ENCODE measurements at regions of chr10 and their contacts with region 1.

Region 1: DNA sequence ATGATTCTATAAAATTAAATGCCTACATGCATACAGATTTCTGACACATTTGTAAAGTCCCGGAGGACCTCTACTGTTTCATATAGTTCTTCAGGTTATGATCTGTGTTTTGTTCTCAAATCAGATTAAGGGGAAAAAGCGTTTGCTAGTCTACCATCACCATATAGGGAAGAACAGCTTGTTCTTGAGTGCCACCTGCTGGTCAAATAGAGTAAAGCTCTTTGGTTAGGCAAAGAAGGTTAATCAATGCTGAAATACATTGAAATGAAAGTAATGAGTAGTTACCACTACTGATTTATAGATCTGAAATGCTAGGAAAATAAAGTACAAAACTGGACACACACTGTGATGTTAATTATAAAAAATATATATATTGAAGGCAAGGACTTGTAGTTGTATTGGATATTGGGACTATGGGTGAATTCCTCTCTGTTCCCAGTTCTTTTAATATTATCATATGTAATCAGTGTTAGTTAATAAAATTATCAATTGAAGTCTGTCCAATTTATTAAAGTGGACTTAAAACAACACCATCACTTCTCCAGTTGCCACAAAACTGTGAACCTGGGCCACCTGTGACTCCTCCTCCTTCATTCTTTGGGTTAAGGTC is 72.6 kb upstream of the PDLIM1 start:
- DNase-seq: peak; percentile 50
- ATAC-seq: peak; percentile 90
- H3K4me3 ChIP-seq: no peak overlapping the region
- H3K27ac ChIP-seq: no peak overlapping the region
- H3K4me1 ChIP-seq: peaks cover 10% of the 10 kb centered on the region; the same call in 1 of the 2 replicates
- H3K27me3 ChIP-seq: no peaks in the 10 kb centered on the region
- CTCF ChIP-seq: peak; percentile 75 to 87 (median 83)
- EP300 ChIP-seq: no peak
- POLR2A ChIP-seq: no peak
- RAD21 ChIP-seq: peak; percentile 100

Region 2: GRCh38 chr10:95133016-95133752 is 230.2 kb before region 1 on chr10:
- CTCF ChIA-PET with region 1: interaction called, 52 read pairs
- POLR2A ChIA-PET with region 1: no interaction called
- RAD21 ChIA-PET with region 1: interaction called, 40 read pairs
- SMC1A ChIA-PET with region 1: interaction called, 30 read pairs
- in situ Hi-C with region 1: loop called (anchors 5 kb)
- intact Hi-C with region 1: loop called (anchors 1 kb)
- DNase-seq: peak; percentile 45
- ATAC-seq: peak; percentile 99
- H3K4me3 ChIP-seq: no peak overlapping the region
- H3K27ac ChIP-seq: no peak overlapping the region
- H3K4me1 ChIP-seq: no peaks in the 10 kb centered on the region
- H3K27me3 ChIP-seq: no peaks in the 10 kb centered on the region
- CTCF ChIP-seq: peak; percentile 71 to 83 (median 79)
- EP300 ChIP-seq: no peak
- POLR2A ChIP-seq: no peak
- RAD21 ChIP-seq: peak; percentile 86

Region 3: DNA sequence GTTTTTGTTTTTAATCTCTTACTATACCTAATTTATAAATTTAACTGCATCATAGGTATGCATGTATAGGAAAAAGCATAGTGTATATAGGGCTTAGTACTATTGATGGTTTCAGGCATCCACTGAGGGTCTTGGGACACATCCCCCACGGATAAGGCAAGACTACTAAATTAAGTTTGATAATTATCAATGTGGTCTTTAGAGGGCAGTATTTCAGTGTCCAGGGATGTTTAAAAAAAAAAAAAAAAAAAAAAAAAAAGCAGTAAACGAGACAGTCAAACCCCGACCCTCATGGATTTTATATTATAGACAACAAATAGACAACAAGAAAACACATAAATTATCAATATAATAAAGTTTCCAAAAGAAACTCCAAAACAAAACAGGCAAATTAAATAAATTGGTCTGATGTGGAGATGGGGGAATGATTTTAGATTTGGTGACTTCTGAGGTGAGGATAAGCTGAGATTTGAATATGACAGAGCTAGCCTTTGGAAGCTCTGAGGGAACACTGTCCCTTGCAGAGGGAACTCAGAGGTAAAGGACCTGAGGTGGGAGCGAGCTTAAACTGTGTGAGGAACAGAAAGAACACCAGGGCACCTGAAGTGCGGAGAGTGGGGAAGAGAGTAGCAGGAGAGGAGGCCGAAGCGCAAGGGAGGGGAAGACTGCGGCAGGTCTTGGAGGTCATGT is 154.6 kb before region 1 on chr10:
- CTCF ChIA-PET with region 1: interaction called, 17 read pairs
- POLR2A ChIA-PET with region 1: interaction called, 3 read pairs
- RAD21 ChIA-PET with region 1: interaction called, 3 read pairs
- SMC1A ChIA-PET with region 1: interaction called, 13 read pairs
- in situ Hi-C with region 1: no loop called
- intact Hi-C with region 1: no loop called
- DNase-seq: no peak
- ATAC-seq: peak; percentile 14; the same call in 1 of the 3 replicates
- H3K4me3 ChIP-seq: no peak overlapping the region
- H3K27ac ChIP-seq: no peak overlapping the region
- H3K4me1 ChIP-seq: no peaks in the 10 kb centered on the region
- H3K27me3 ChIP-seq: no peaks in the 10 kb centered on the region
- CTCF ChIP-seq: peak in 1 of 3 experiments; percentile 15; a peak in 2 of 6 replicates
- EP300 ChIP-seq: no peak
- POLR2A ChIP-seq: no peak
- RAD21 ChIP-seq: peak; percentile 22; the same call in 1 of the 2 replicates

Region 4: GRCh38 chr10:95254629-95255028 is 108.8 kb before region 1 on chr10:
- CTCF ChIA-PET with region 1: interaction called, 11 read pairs
- POLR2A ChIA-PET with region 1: no interaction called
- RAD21 ChIA-PET with region 1: interaction called, 5 read pairs
- SMC1A ChIA-PET with region 1: interaction called, 262 read pairs
- in situ Hi-C with region 1: loop called (anchors 5 kb)
- intact Hi-C with region 1: no loop called
- DNase-seq: no peak
- ATAC-seq: peak; percentile 57
- H3K4me3 ChIP-seq: no peak overlapping the region
- H3K27ac ChIP-seq: no peak overlapping the region
- H3K4me1 ChIP-seq: no peaks in the 10 kb centered on the region; the same call in 1 of the 2 replicates
- H3K27me3 ChIP-seq: no peaks in the 10 kb centered on the region
- CTCF ChIP-seq: no peak
- EP300 ChIP-seq: no peak
- POLR2A ChIP-seq: no peak
- RAD21 ChIP-seq: no peak

Region 5: DNA sequence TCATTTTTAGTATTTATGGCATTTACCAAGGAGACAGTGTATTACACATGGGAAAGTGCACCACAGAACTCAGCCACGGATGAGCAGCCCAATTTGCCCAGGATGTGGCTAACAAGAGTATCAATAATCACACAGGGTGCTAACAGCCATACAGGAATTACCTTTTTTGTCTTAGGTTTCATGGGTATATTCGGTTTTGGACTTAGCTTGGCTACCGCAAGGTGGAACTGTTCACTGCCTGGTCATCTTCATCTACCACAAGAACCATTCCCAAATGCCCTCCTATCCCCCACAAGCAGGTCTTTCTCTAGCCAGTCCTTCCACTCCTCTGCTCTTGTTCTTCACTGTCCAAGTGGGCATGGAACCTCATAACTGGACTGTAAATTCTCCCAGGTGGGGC is 78.6 kb before region 1 on chr10:
- CTCF ChIA-PET with region 1: interaction called, 348 read pairs
- POLR2A ChIA-PET with region 1: interaction called, 5 read pairs
- RAD21 ChIA-PET with region 1: interaction called, 139 read pairs
- SMC1A ChIA-PET with region 1: interaction called, 313 read pairs
- in situ Hi-C with region 1: no loop called
- intact Hi-C with region 1: loop called (anchors 1 kb)
- DNase-seq: no peak
- ATAC-seq: peak; percentile 53
- H3K4me3 ChIP-seq: peak overlapping the region; percentile 59
- H3K27ac ChIP-seq: peak overlapping the region; percentile 50
- H3K4me1 ChIP-seq: peaks cover 22% of the 10 kb centered on the region
- H3K27me3 ChIP-seq: no peaks in the 10 kb centered on the region
- CTCF ChIP-seq: peak; percentile 24 to 56 (median 55); a peak in 5 of 6 replicates
- EP300 ChIP-seq: no peak
- POLR2A ChIP-seq: no peak
- RAD21 ChIP-seq: peak; percentile 36; the same call in 1 of the 2 replicates

Region 6: GRCh38 chr10:95343573-95343972 is 19.8 kb before region 1 on chr10:
- CTCF ChIA-PET with region 1: interaction called, 21 read pairs
- POLR2A ChIA-PET with region 1: no interaction called
- RAD21 ChIA-PET with region 1: interaction called, 4 read pairs
- SMC1A ChIA-PET with region 1: interaction called, 6 read pairs
- in situ Hi-C with region 1: no loop called
- intact Hi-C with region 1: no loop called
- DNase-seq: no peak
- ATAC-seq: no peak
- H3K4me3 ChIP-seq: no peak overlapping the region
- H3K27ac ChIP-seq: no peak overlapping the region
- H3K4me1 ChIP-seq: peaks cover 4% of the 10 kb centered on the region; the same call in 1 of the 2 replicates
- H3K27me3 ChIP-seq: no peaks in the 10 kb centered on the region
- CTCF ChIP-seq: no peak
- EP300 ChIP-seq: no peak
- POLR2A ChIP-seq: no peak
- RAD21 ChIP-seq: no peak

Region 7: GRCh38 chr10:95601116-95601719 is 237.8 kb after region 1 on chr10:
- CTCF ChIA-PET with region 1: interaction called, 16 read pairs
- POLR2A ChIA-PET with region 1: interaction called, 3 read pairs
- RAD21 ChIA-PET with region 1: interaction called, 3 read pairs
- SMC1A ChIA-PET with region 1: interaction called, 4 read pairs
- in situ Hi-C with region 1: no loop called
- intact Hi-C with region 1: no loop called
- DNase-seq: peak; percentile 5
- ATAC-seq: peak; percentile 94
- H3K4me3 ChIP-seq: no peak overlapping the region
- H3K27ac ChIP-seq: no peak overlapping the region
- H3K4me1 ChIP-seq: no peaks in the 10 kb centered on the region
- H3K27me3 ChIP-seq: peaks cover 0 to 3% of the 10 kb centered on the region in 2 experiments; a peak in 2 of 4 replicates
- CTCF ChIP-seq: peak; percentile 92 to 95 (median 94)
- EP300 ChIP-seq: no peak
- POLR2A ChIP-seq: no peak
- RAD21 ChIP-seq: peak; percentile 95